CD4-positive, alpha-beta T cell (primary cell): ENCODE measurements at regions of chr11 and their contacts with region 1.

Region 1: GRCh38 chr11:69048718-69049489 is at the start of gene TPCN2:
- DNase-seq: peak; percentile 82 to 98 (median 89)
- ATAC-seq: peak; percentile 99
- H3K4me3 ChIP-seq: peak within 1 kb of the TSS; percentile 66
- H3K4me3 Mint-ChIP-seq: peak within 1 kb of the TSS; percentile 87
- H3K27ac ChIP-seq: peak within 1 kb of the TSS; percentile 45 to 80
- H3K27ac Mint-ChIP-seq: peak within 1 kb of the TSS; percentile 90
- H3K4me1 ChIP-seq: peaks cover 39% of the 10 kb centered on the region
- H3K4me1 Mint-ChIP-seq: peaks cover 30% of the 10 kb centered on the region
- H3K27me3 ChIP-seq: no peaks in the 10 kb centered on the region
- H3K27me3 Mint-ChIP-seq: peaks cover 5% of the 10 kb centered on the region
- CTCF ChIP-seq: no peak
- total RNA-seq, gene TPCN2: 10.2 to 11.5 TPM

Region 2: GRCh38 chr11:68751004-68751856 is 297.7 kb before region 1 on chr11 and contains the start of gene TESMIN:
- CTCF ChIA-PET with region 1: no interaction called
- POLR2A ChIA-PET with region 1: no interaction called
- intact Hi-C with region 1: loop called in 1 of 2 experiments (anchors 5 kb)
- DNase-seq: peak; percentile 86 to 97 (median 94)
- ATAC-seq: peak; percentile 94
- H3K4me3 ChIP-seq: peak within 1 kb of the TSS; percentile 41
- H3K4me3 Mint-ChIP-seq: peak within 1 kb of the TSS; percentile 81
- H3K27ac ChIP-seq: no peak within 1 kb of the TSS
- H3K27ac Mint-ChIP-seq: no peak within 1 kb of the TSS
- H3K4me1 ChIP-seq: peaks cover 18% of the 10 kb centered on the region
- H3K4me1 Mint-ChIP-seq: peaks cover 11% of the 10 kb centered on the region
- H3K27me3 ChIP-seq: no peaks in the 10 kb centered on the region
- H3K27me3 Mint-ChIP-seq: no peaks in the 10 kb centered on the region
- CTCF ChIP-seq: no peak
- total RNA-seq, gene TESMIN: 3.7 to 4.3 TPM

Region 3: DNA sequence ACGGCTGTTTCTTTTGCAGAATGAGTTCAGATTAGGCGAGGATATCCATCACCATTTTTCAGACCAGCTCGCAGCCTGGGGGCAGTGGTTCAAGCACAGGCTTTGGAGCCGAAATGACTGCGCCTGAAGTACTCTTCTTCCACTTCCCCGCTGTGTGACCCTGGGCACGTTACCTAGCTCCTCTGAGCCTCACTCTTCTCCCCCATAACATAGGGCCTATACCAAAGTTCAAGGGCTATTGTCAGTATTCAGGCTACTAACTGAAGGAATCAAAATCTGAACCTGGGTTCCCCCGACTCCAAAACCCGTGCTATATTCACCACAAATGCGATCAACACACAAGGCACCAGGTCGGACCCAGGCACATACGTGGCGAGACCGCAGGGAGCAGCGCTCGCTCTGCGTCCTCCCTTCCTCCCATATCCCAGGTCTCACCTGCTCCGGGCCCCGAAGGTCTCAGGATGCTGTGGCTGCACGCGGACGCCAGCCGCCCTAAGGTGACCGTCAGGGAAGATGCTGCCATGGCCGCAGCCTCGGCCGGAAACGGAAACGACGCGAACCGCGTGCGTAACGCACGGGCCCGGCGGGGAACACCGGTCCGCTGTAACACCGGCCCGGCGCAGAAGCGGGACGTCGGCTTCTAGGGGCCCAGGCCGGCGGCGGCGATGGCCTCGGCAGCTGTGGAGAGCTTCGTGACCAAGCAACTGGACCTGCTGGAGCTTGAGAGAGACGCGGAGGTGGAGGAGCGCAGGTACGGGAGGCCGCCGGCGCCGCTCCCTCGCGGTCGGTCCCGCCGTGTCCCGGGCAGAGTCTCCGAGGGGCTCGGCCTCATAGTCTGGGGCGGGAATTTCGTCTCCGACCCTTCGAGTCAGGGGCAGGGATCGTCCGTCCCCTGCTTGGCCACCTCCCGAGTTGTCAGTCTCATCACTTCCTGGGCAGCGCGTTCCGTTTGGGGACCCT is 145.3 kb before region 1 on chr11 and contains the starts of genes IGHMBP2 and MRPL21:
- CTCF ChIA-PET with region 1: no interaction called
- POLR2A ChIA-PET with region 1: no interaction called
- intact Hi-C with region 1: loop called in 1 of 2 experiments (anchors 5 kb)
- DNase-seq: peak; percentile 71 to 93 (median 82)
- ATAC-seq: peak; percentile 92
- H3K4me3 ChIP-seq: peak within 1 kb of the TSS; percentile 95
- H3K4me3 Mint-ChIP-seq: peak within 1 kb of the TSS; percentile 98
- H3K27ac ChIP-seq: peak within 1 kb of the TSS; percentile 57 to 67
- H3K27ac Mint-ChIP-seq: peak within 1 kb of the TSS; percentile 92
- H3K4me1 ChIP-seq: peaks cover 31% of the 10 kb centered on the region
- H3K4me1 Mint-ChIP-seq: peaks cover 50% of the 10 kb centered on the region
- H3K27me3 ChIP-seq: no peaks in the 10 kb centered on the region
- H3K27me3 Mint-ChIP-seq: no peaks in the 10 kb centered on the region
- CTCF ChIP-seq: no peak
- total RNA-seq, gene IGHMBP2: 17.5 to 18.5 TPM
- total RNA-seq, gene MRPL21: 47.5 to 48.0 TPM

Region 4: GRCh38 chr11:69035150-69035945 is 13.6 kb before region 1 on chr11:
- CTCF ChIA-PET with region 1: no interaction called
- POLR2A ChIA-PET with region 1: no interaction called
- intact Hi-C with region 1: no loop called
- DNase-seq: no peak
- ATAC-seq: no peak
- H3K4me3 ChIP-seq: no peak overlapping the region
- H3K4me3 Mint-ChIP-seq: no peak overlapping the region
- H3K27ac ChIP-seq: no peak overlapping the region
- H3K27ac Mint-ChIP-seq: no peak overlapping the region
- H3K4me1 ChIP-seq: no peaks in the 10 kb centered on the region
- H3K4me1 Mint-ChIP-seq: no peaks in the 10 kb centered on the region
- H3K27me3 ChIP-seq: no peaks in the 10 kb centered on the region
- H3K27me3 Mint-ChIP-seq: peaks cover 11% of the 10 kb centered on the region
- CTCF ChIP-seq: no peak